ENCODE measurements at regions of chr3 and their contacts with region 1.

Region 1: DNA sequence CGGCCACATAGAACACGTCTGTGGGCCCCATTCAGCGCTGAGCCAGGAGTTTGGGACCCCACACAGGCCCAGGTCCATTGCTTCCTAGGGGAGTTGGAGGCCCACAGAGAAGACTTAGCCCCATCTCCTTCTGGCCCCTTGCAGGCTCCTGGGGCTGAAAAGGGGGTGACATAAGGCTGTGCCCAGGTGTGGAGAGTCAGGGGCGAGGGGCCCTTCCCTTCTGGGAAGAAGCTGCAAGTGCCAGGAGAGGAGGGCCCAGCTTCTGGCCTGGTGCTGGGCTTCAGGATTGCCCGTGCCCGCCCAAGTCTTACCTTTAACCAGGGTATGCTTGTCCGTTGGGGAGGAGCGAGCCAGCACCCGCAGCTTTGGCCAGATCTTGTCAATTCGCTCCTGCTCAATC is 28.9 kb upstream of the SEC13 start:
- DNase-seq: no peak
- H3K4me3 ChIP-seq: no peak overlapping the region
- CTCF ChIP-seq: no peak
- POLR2A ChIP-seq: no peak

Region 2: GRCh38 chr3:10744098-10744465 is 394.3 kb after region 1 on chr3:
- intact Hi-C with region 1: loop called (anchors 5 kb)
- DNase-seq: no peak
- H3K4me3 ChIP-seq: no peak overlapping the region
- CTCF ChIP-seq: no peak
- POLR2A ChIP-seq: no peak